Ascending aorta (tissue), 2 donors: ENCODE measurements at regions of chr2 and their contacts with region 1.

Region 1: GRCh38 chr2:101001691-101002561 is at the start of gene RPL31:
- DNase-seq: peak; percentile 89 to 98
- H3K4me3 ChIP-seq: peak within 1 kb of the TSS; percentile 90
- H3K27ac ChIP-seq: peak within 1 kb of the TSS; percentile 89 to 91
- H3K4me1 ChIP-seq: peaks cover 3 to 15% of the 10 kb centered on the region in 2 donors
- H3K27me3 ChIP-seq: no peaks in the 10 kb centered on the region
- CTCF ChIP-seq: no peak
- total RNA-seq, gene RPL31: 479 TPM

Region 2: DNA sequence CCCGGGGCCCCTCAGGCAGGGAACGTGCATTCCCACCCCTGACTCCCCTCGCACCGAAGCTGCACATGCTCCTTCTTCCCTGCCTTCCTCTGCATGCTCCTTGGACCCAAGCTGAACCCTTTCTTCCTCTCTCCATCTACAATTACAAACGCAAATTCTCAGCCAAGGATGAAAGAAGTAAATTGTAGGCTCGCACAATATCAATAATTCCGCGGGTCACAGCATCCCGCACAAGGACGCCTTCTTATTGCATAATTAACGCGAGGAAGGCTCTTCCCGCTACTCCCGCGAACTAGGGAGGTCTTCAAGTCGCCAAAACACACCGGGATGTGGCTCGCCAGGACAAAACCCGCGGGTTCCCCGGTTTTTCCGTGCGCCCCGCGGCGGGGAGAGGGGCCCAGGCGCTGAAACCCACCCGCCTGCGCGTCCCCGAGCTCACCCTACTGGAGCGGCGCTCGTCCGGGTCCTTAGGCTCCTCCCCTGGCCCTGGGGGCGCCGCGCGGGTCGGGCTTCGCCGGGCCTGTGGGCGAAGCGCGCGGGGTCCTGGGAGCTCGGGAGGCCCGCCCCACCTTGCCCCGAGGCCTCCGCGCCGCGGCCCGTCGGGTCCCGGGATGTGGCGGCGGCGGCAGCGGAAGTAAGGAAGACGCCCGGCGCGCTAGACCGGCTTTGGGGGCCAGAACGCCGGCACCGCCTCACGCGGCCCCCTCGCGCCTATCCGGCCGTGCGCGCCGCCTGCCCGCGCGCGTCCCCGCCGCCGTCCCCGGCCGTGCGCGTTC is 584.8 kb before region 1 on chr2 and contains the start of gene CHST10:
- intact Hi-C with region 1: loop called (anchors 10 kb)
- DNase-seq: peak in 1 of 2 donors; percentile 70
- H3K4me3 ChIP-seq: peak within 1 kb of the TSS; percentile 83 to 84
- H3K27ac ChIP-seq: peak within 1 kb of the TSS; percentile 66 to 75
- H3K4me1 ChIP-seq: peaks cover 0 to 6% of the 10 kb centered on the region in 2 donors
- H3K27me3 ChIP-seq: no peaks in the 10 kb centered on the region
- CTCF ChIP-seq: no peak
- total RNA-seq, gene CHST10: 4.9 TPM

Region 3: DNA sequence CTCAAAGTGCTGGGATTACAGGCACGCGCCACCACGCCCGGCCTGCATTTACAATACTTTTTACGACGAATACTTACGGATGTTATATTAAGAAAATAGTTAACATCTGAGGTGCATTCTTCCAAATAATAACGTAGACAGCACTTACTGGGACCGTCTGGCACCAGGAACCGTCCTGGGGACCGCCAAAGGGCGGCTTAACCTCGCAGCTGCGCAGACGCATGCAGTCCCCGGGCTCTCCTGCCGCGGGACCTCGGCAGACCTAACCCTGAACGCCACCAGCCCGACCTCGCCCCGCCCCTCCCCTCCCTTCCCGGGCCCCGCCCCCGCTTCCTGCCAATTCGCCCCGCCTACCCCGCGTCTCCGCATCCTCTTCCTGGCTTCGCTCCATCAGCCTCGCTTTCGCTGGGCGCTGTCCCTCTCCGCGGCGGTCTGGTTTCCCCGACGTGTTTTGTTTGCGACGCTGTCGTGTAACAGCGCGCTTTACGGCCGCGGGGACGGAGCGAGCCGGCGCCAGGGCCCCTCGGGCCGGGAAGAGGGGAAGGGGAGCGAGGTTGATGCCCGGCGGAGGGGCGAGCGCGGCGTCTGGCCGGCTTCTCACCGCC is 250.6 kb after region 1 on chr2 and contains the start of gene CNOT11:
- intact Hi-C with region 1: loop called (anchors 2 kb)
- DNase-seq: peak; percentile 93 to 99
- H3K4me3 ChIP-seq: peak within 1 kb of the TSS; percentile 83 to 95
- H3K27ac ChIP-seq: peak within 1 kb of the TSS; percentile 90 to 97
- H3K4me1 ChIP-seq: peaks cover 4 to 11% of the 10 kb centered on the region in 2 donors
- H3K27me3 ChIP-seq: no peaks in the 10 kb centered on the region
- CTCF ChIP-seq: peak in 1 of 3 experiments; percentile 25
- total RNA-seq, gene CNOT11: 32.5 TPM

Region 4: DNA sequence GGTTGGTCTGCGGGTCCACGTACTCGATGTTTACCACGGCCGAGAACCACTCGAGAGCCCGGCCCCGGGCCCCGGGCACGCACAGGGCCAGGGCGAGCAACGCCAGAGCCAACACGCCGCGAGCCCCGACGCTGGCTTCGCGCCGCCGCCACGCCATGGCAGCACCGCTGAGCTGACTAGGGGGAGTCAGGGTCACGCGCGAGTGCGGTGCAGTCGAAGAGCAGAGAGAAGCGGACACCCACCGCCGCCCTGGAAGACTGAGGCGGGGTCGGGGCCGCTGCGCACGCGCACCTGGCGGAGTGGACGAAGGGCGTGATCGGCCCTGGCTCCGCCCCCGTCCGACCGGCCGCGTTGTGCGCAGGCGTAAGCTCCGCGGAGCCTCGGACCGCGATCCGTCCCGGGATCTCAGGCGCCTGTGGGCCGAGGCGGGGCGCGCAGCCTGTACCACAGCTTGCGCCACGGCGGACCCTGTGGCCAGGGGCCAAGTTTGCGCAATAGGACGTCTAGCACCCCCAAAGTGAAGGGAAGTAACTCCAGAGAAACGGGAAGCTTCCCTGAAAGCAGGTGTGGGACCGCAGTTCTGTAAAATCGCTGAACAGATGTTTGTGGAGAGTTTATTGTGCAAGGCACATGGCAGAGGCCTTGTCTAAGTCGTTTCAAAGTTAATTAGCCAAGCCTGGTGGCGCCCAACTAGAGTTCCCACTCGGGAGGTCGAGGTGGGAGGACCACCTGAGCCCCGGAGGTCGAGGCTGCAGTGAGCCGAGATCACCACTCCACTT is 306.7 kb after region 1 on chr2 and contains the start of gene RNF149:
- intact Hi-C with region 1: loop called (anchors 5 kb)
- DNase-seq: peak; percentile 77 to 96
- H3K4me3 ChIP-seq: peak within 1 kb of the TSS; percentile 76 to 95
- H3K27ac ChIP-seq: peak within 1 kb of the TSS; percentile 92 to 94
- H3K4me1 ChIP-seq: peaks cover 3 to 16% of the 10 kb centered on the region in 2 donors
- H3K27me3 ChIP-seq: no peaks in the 10 kb centered on the region
- CTCF ChIP-seq: no peak
- total RNA-seq, gene RNF149: 39.9 TPM